AG04449 (cell line): ENCODE measurements at regions of chr2 and their contacts with region 1.

Region 1: DNA sequence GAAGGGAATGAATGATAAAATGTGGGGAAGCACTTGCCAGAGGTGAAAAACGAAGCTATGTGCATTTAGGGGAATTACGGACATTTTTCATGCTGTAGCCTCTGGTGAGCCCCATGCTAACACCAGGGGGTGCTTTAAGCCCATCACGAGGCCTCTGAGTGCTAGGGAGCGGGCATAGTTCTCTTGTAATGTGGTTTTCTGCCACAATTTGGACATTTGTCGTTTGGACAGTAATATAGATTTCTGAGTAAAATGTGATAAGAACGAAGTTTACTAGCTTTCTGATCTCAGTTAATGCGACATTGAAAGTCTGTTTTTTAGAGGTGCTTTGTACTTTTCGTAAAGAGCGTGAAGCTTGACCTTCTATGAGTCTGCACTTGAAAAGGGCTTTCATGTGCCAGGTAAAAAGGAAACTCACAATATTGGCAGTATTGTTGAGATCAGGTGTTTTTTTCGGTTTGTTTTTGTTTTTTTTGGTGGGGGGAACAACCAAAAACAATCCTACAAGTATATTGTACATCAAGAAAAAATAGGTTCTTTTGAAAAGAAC is 50.6 kb downstream of the TRAF3IP1 start:
- DNase-seq: no peak
- H3K4me3 ChIP-seq: no peak overlapping the region
- CTCF ChIP-seq: peak; percentile 79

Region 2: DNA sequence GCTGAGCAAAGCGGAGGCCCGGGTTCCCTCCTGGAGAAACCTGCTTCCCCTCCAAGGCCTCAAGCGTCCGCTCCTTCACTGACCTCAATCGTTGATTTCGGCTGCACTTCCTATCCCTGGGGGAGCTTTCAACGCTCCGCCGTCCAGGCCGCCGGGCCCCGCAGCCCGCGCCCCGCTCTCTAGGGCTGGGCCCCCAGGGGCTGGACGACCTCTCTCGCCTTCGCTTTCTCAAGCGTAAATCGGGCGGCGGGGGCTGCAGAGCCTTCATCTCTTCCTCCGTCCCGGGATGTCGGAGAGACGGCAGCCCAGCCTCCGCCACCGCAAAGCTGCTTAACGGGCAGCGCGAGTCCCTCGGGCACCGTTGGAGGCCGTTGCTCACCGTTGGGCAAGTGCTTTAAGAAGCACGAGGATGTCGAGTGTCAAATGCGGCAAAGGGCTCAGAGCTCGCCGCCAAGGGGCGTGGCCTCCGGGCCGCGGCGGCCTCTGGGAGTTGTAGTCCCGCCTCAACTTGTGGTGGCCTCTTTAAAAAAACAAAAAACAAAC is 139.6 kb before region 1 on chr2:
- CTCF ChIA-PET with region 1: no interaction called
- POLR2A ChIA-PET with region 1: no interaction called
- DNase-seq: no peak
- H3K4me3 ChIP-seq: peak overlapping the region; percentile 58
- CTCF ChIP-seq: no peak

Region 3: GRCh38 chr2:238391042-238391689 is 20.3 kb after region 1 on chr2:
- CTCF ChIA-PET with region 1: interaction called, 11 read pairs
- POLR2A ChIA-PET with region 1: no interaction called
- DNase-seq: no peak
- H3K4me3 ChIP-seq: no peak overlapping the region
- CTCF ChIP-seq: no peak

Region 4: DNA sequence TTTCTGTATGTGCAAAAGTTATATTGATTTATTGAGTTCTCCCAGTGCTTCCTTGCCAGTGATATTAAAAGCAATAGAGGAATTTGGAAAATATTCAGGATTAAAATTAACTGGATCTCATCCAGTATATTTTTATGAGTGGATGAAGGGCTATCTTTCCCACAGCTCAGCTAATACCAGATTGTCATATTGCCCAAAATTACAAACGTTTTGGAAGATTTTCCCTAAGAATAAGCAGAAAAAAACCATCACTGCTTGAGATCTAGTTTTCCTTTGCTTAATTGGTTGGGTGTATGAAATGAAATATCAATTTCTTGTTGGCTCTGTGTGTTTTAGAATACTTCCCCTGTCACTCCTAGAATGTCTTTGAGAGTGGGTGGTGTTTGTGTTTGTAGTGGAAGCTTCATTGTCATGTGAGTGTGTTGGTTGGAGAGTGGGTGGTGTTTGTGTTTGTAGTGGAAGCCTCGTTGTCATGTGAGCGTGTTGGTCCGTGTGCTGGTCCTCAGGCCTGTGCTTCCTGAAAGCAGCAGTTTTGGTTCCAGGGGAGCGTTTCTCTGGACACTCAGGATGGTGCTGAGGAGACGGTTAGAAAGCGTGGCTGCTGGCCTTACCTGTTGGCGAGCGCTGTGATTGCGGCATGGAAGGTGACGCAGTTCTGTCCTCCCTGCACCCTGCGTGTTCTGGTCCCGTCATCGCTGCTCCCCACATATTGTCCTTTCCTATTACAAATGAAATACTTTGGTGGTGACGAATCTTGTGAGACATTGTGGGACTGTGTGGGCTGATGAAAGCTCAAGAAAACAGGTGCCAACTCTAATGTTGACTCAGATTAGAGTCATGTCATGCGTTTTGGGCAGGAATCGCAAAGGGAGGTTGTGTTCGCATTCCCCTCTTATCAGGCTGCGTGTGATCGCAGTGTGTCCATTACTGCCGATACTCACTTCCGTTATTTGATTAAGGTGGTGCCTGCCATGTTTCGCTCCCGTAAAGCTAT is 68.3 kb after region 1 on chr2:
- CTCF ChIA-PET with region 1: interaction called, 10 read pairs
- POLR2A ChIA-PET with region 1: no interaction called
- DNase-seq: no peak
- H3K4me3 ChIP-seq: no peak overlapping the region
- CTCF ChIP-seq: no peak

Region 5: DNA sequence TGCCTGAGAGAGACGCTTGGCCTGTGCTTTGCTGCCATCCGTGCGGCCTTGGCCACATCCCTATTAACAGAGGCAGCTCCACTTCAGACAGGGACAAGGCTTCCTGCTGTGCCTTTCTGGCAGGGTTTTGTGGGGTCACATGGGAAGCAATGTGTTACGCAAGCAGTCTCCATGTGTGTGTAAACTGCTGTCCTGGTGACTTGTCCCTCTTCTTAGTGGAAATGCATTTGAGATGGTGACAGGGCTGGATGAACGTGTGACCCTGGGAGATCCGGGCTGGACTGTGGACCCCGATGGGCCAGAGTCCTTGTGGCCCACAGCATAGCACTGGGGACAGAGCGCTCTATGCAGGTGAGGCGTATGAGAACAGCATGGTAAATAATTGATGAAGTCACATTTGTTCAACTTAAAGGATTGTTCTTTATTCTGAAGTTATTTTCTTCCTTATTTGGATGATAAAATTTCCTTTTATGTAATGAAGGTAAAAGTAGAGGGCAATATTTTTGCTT is 79.1 kb after region 1 on chr2:
- CTCF ChIA-PET with region 1: interaction called, 27 read pairs
- POLR2A ChIA-PET with region 1: no interaction called
- DNase-seq: no peak
- H3K4me3 ChIP-seq: no peak overlapping the region
- CTCF ChIP-seq: no peak

Region 6: DNA sequence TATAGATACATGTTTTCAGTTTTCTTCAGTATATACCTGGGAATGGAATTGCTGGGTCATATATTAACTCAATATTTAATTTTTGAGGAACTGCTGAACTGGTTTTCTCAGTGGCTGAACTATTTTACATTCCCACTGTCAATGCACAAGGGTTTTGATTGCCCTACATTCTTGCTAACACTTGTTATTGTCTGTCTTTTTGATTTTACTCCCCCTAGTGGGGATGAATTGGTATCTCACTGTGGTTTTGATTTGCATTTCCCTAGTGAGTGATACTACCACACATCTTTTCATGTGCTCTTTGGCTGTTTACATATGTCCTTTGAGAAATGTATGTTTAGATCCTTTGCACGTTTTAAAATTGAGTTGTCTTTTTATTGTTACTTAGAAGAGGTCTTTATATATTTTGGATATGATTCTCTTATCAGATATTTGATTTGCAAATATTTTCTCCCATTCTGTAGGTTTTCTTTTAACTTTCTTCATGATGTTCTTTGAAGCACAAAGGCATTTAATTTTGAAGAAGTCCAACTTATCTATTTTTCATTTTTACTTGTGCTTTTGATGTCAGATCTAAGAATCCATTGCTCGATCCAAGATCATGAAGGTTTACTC is 92.0 kb after region 1 on chr2:
- CTCF ChIA-PET with region 1: interaction called, 142 read pairs
- POLR2A ChIA-PET with region 1: no interaction called
- DNase-seq: no peak
- H3K4me3 ChIP-seq: no peak overlapping the region
- CTCF ChIP-seq: peak; percentile 33

Region 7: GRCh38 chr2:238513346-238513745 is 142.4 kb after region 1 on chr2:
- CTCF ChIA-PET with region 1: interaction called, 21 read pairs
- POLR2A ChIA-PET with region 1: no interaction called
- DNase-seq: no peak
- H3K4me3 ChIP-seq: no peak overlapping the region
- CTCF ChIP-seq: peak; percentile 54

Region 8: GRCh38 chr2:238528953-238529781 is 158.3 kb after region 1 on chr2:
- CTCF ChIA-PET with region 1: interaction called, 18 read pairs
- POLR2A ChIA-PET with region 1: no interaction called
- DNase-seq: peak; percentile 55
- H3K4me3 ChIP-seq: no peak overlapping the region
- CTCF ChIP-seq: no peak